B cell (primary cell): ENCODE measurements at regions of chr2 and their contacts with region 1.

Region 1: GRCh38 chr2:241734467-241735208 is at the start of gene D2HGDH:
- DNase-seq: peak; percentile 93
- ATAC-seq: peak; percentile 96
- H3K4me3 ChIP-seq: peak within 1 kb of the TSS; percentile 5 to 94 (median 83)
- H3K4me3 Mint-ChIP-seq: peak within 1 kb of the TSS; percentile 92
- H3K27ac ChIP-seq: peak within 1 kb of the TSS; percentile 40 to 84
- H3K27ac Mint-ChIP-seq: peak within 1 kb of the TSS; percentile 81
- H3K4me1 ChIP-seq: peaks cover 4 to 30% of the 10 kb centered on the region in 2 donors
- H3K4me1 Mint-ChIP-seq: peaks cover 38% of the 10 kb centered on the region
- H3K27me3 ChIP-seq: no peaks in the 10 kb centered on the region
- H3K27me3 Mint-ChIP-seq: no peaks in the 10 kb centered on the region
- CTCF ChIP-seq: no peak
- total RNA-seq, gene D2HGDH: 57.1 and 67.7 TPM in 2 replicates

Region 2: GRCh38 chr2:241609859-241610793 is 124.5 kb before region 1 on chr2:
- CTCF ChIA-PET with region 1: interaction called, 3 read pairs
- POLR2A ChIA-PET with region 1: no interaction called
- intact Hi-C with region 1: loop called (anchors 1 kb)
- DNase-seq: peak; percentile 93
- ATAC-seq: peak; percentile 99
- H3K4me3 ChIP-seq: peak overlapping the region in 4 of 5 experiments; percentile 50 to 71 (median 62)
- H3K4me3 Mint-ChIP-seq: peak overlapping the region; percentile 66
- H3K27ac ChIP-seq: peak overlapping the region; percentile 50 to 74
- H3K27ac Mint-ChIP-seq: peak overlapping the region; percentile 63
- H3K4me1 ChIP-seq: peaks cover 8 to 16% of the 10 kb centered on the region in 2 donors
- H3K4me1 Mint-ChIP-seq: peaks cover 20% of the 10 kb centered on the region
- H3K27me3 ChIP-seq: no peaks in the 10 kb centered on the region
- H3K27me3 Mint-ChIP-seq: no peaks in the 10 kb centered on the region
- CTCF ChIP-seq: peak; percentile 76

Region 3: DNA sequence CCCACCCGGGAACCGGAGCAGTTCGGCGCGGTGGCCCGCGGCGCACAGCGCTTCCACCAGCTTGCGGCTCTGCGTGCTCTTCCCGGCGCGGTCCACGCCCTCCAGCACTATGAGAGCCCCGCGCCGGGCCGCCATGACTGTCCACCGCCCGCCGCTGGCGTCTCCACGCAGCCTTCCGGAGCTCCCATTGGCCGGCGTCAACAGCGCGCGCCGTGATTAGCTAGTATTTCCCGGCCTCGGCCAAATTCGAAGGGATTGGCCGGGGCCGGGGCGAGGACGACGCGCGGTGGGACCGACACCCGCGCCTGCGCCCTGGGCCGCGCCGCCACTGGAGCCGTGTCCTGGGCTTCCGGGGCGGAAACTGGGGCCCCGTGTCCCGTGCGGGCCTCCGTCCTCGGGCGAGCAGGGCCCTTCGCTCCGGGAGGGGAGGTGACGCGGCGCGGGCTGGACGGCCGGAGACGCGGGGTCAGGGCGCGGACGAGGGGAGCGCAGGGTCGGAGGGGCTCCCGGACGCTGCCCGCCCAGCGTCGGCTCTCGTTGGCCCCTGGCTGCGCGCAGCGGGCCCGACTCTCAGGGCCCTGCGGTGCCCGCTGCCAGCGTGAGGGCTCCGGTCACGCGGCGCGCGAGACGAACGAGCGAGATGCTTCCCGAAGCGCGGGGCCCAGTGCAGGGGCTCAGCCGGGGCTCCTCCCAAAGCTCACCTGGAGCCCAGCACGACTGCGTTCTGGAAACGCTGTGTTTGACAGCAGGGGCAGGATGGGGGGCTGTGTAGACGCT is 47.8 kb before region 1 on chr2 and contains the start of gene DTYMK:
- CTCF ChIA-PET with region 1: interaction called, 3 read pairs
- POLR2A ChIA-PET with region 1: interaction called, 4 read pairs
- intact Hi-C with region 1: loop called (anchors 1 kb)
- DNase-seq: peak; percentile 97
- ATAC-seq: peak; percentile 95
- H3K4me3 ChIP-seq: peak within 1 kb of the TSS; percentile 71 to 91 (median 82)
- H3K4me3 Mint-ChIP-seq: peak within 1 kb of the TSS; percentile 84
- H3K27ac ChIP-seq: peak within 1 kb of the TSS; percentile 61 to 91
- H3K27ac Mint-ChIP-seq: peak within 1 kb of the TSS; percentile 68
- H3K4me1 ChIP-seq: peaks cover 8 to 19% of the 10 kb centered on the region in 2 donors
- H3K4me1 Mint-ChIP-seq: peaks cover 26% of the 10 kb centered on the region
- H3K27me3 ChIP-seq: no peaks in the 10 kb centered on the region
- H3K27me3 Mint-ChIP-seq: no peaks in the 10 kb centered on the region
- CTCF ChIP-seq: no peak
- total RNA-seq, gene DTYMK: 20.7 and 26.3 TPM in 2 replicates